ENCODE measurements at regions of chr14 and their contacts with region 1.

Region 1: DNA sequence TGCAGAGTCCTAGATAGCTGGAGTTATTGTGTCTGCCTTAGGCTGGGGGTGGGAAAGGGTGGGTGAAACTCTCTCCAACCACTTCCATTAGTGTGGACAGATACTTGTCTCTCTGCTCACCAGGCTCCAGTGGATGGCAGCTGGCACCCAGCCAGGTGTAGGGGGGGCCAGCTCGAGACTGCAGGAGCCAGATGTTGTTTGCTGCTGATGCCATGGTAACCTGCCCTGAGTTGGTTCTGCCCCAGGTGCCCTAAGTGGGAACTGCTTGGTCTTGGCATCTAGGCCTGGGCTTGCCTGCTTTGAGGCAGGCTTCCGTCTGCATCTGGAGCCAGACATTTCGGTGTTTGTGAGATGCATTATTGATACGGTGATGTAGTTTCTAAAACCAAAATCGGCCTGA is 82.2 kb downstream of the ADCK1 start:
- DNase-seq: peak; percentile 18
- H3K4me3 ChIP-seq: no peak overlapping the region
- H3K27ac ChIP-seq: no peak overlapping the region
- H3K4me1 ChIP-seq: no peaks in the 10 kb centered on the region
- H3K27me3 ChIP-seq: no peaks in the 10 kb centered on the region
- CTCF ChIP-seq: no peak

Region 2: DNA sequence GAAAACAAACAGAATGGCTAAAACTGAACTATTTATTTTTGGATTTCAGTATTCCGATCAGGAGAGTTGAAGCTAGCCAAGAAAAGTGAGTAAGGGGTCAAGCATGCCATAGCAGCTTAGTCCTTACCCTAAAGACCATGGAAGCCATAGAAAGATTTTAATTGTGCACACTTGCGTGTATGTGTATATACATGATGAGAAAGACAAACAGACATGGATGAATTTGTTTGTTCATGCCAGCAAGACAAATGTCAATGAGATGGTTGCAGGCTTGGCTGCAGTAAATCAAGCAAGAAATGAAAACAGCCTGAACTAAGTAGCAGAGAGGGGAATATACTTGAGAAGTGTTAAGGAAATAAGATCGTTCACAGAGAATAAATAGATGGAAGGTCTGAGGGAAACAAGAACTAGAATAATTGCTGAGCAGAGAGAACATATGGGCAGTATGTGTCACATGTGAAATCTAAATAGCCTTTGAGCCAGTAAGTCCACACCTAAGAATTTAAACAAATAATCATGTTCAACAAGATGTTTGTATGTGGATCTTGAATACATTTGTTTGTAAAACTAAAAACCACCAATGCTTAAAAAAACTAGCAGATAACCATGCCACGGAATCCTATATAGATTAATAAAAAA is 135.9 kb before region 1 on chr14:
- CTCF ChIA-PET with region 1: no interaction called
- dilution Hi-C with region 1: no loop called
- in situ Hi-C with region 1: no loop called
- intact Hi-C with region 1: no loop called
- DNase-seq: no peak
- H3K4me3 ChIP-seq: no peak overlapping the region
- H3K27ac ChIP-seq: no peak overlapping the region
- H3K4me1 ChIP-seq: no peaks in the 10 kb centered on the region
- H3K27me3 ChIP-seq: no peaks in the 10 kb centered on the region
- CTCF ChIP-seq: no peak

Region 3: DNA sequence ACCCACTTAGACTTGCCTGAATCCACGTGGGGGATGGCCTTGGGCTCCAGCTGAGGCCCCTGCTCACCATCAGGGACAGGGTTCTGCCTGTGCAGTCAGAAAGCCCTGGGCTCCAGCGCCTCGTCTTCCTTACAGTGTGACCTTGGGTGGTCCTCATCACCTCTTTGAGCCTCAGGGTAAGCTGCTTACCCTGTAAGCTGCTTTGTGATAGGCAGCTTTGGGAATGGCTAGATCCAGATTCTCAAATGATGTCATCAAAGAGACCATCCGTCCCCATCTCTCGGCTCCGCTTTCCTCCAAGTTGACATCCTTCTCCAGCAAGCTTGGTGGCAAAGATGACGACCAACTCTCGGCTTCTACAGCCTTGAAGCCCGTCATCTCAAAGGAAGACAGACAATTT is 44.8 kb after region 1 on chr14:
- CTCF ChIA-PET with region 1: no interaction called
- dilution Hi-C with region 1: loop called (anchors 5 kb)
- in situ Hi-C with region 1: no loop called
- intact Hi-C with region 1: no loop called
- DNase-seq: no peak
- H3K4me3 ChIP-seq: no peak overlapping the region
- H3K27ac ChIP-seq: no peak overlapping the region
- H3K4me1 ChIP-seq: no peaks in the 10 kb centered on the region
- H3K27me3 ChIP-seq: no peaks in the 10 kb centered on the region
- CTCF ChIP-seq: no peak

Region 4: GRCh38 chr14:77988970-77989369 is 106.9 kb after region 1 on chr14:
- CTCF ChIA-PET with region 1: no interaction called
- dilution Hi-C with region 1: no loop called
- in situ Hi-C with region 1: no loop called
- intact Hi-C with region 1: no loop called
- DNase-seq: peak; percentile 76
- H3K4me3 ChIP-seq: no peak overlapping the region
- H3K27ac ChIP-seq: no peak overlapping the region
- H3K4me1 ChIP-seq: no peaks in the 10 kb centered on the region
- H3K27me3 ChIP-seq: no peaks in the 10 kb centered on the region
- CTCF ChIP-seq: no peak